CD8-positive, alpha-beta T cell (primary cell): ENCODE measurements at regions of chr10 and their contacts with region 1.

Region 1: DNA sequence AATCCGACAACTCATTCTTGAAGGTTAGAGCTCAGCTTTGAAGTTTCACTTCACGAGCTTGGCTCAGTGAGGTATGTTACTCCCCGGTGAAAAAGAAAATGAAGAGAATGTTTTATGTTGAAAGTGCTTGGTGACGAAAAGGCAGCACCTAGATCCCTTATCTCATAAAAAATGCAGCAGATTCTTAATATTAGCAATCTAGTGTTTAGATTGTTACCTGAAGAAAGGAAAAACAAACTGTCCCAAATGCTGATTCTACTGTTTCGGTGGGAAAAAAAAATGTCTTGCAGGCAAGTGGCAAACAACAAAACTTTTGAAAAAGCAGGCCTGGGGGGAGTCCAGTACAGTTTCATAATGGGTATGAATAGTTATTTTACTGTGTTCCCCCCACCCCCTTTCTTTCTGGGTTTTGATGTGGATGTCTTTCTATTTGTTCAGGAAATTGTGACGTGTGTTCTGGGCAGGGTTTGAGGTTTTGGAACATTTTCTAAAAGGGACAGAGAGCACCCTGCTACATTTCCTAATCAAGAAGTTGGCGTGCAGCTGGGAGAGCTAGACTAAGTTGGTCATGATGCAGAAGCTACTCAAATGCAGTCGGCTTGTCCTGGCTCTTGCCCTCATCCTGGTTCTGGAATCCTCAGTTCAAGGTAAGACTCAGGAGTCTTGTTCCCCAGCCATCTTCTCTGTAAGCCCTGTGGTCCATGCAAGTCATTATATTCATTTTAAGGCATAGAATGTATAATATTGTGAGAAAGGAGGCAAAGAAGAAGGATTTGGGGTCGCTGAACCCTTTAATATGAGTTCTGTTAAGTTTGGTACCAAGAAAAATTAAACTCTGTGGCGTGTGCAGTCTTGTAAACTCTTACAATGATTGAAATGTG is at the start of gene SRGN:
- DNase-seq: peak; percentile 57 to 96 (median 76)
- ATAC-seq: peak; percentile 57
- H3K4me3 ChIP-seq: peak within 1 kb of the TSS; percentile 62 to 89
- H3K4me3 Mint-ChIP-seq: peak within 1 kb of the TSS; percentile 95
- H3K27ac ChIP-seq: peak within 1 kb of the TSS; percentile 97
- H3K27ac Mint-ChIP-seq: peak within 1 kb of the TSS; percentile 99
- H3K4me1 ChIP-seq: peaks cover 41% of the 10 kb centered on the region
- H3K4me1 Mint-ChIP-seq: peaks cover 57% of the 10 kb centered on the region
- H3K27me3 ChIP-seq: no peaks in the 10 kb centered on the region
- H3K27me3 Mint-ChIP-seq: no peaks in the 10 kb centered on the region
- CTCF ChIP-seq: no peak
- total RNA-seq, gene SRGN: 570 to 583 TPM

Region 2: DNA sequence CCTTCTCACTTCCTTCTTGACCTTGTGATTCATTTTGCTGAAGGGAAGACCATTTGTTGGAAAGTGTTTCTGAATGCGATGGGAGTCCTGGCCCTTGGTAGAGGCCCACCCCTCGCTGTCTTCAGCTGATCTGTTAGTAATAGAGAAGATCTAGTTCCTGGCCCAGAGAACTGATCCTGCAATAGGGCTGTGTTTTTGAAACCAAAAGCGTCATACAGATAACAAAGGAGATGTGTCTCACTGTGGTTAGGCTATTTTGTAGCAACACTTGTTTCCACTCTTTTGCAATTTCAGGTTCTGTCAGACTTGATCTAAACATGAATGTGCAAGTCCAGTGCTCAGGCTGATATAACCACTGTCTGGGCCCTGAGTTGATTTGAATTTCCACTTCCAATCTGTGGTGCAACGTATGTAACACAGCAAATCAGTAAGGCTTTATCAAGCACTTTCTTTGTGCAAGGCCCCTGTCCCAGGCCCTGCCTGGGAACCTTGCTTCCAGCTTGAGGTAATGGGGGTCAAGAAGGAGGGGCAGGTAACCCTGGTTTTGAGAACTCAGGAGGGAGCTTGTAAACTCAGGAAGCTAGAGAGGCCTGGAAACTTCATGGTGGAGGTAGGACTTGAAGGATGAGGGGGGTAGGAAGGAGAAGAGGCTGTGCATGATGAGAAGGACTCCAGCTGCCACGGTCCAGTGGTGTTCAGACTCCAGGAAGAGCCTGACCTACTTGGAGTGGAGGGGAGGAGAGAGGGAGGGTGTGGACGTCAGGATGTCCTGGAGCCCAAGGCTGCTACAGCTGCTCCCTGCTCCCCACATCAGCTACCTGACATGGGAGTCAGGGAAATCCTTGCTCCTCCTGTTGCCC is 42.2 kb before region 1 on chr10:
- CTCF ChIA-PET with region 1: interaction called, 14 read pairs
- POLR2A ChIA-PET with region 1: interaction called, 6 read pairs
- intact Hi-C with region 1: loop called (anchors 1 to 2 kb)
- DNase-seq: peak in 8 of 9 experiments; percentile 6 to 79 (median 43)
- ATAC-seq: peak; percentile 78
- H3K4me3 ChIP-seq: no peak overlapping the region
- H3K4me3 Mint-ChIP-seq: peak overlapping the region; percentile 35
- H3K27ac ChIP-seq: peak overlapping the region; percentile 45 to 89
- H3K27ac Mint-ChIP-seq: peak overlapping the region; percentile 93
- H3K4me1 ChIP-seq: peaks cover 27% of the 10 kb centered on the region
- H3K4me1 Mint-ChIP-seq: peaks cover 24% of the 10 kb centered on the region
- H3K27me3 ChIP-seq: no peaks in the 10 kb centered on the region
- H3K27me3 Mint-ChIP-seq: no peaks in the 10 kb centered on the region
- CTCF ChIP-seq: no peak

Region 3: DNA sequence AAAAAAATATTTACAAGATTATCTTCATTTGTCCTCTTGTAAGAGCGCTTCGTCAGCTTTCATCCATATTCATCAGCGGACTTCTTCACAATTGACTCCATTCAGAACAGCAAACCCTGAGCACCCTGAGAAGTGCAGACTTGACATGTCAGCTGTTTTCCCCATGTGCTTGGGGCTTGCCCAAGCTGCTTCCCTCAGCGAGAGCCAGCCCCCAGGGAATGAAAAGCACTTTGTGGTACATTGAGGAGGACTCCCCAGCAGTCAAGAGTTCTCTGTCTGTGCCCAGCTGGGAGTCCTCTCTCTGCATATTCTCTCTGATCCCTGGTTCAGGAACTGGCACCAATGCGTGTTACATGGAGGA is 155.0 kb after region 1 on chr10:
- CTCF ChIA-PET with region 1: no interaction called
- POLR2A ChIA-PET with region 1: no interaction called
- intact Hi-C with region 1: no loop called
- DNase-seq: no peak
- ATAC-seq: no peak
- H3K4me3 ChIP-seq: no peak overlapping the region
- H3K4me3 Mint-ChIP-seq: no peak overlapping the region
- H3K27ac ChIP-seq: no peak overlapping the region
- H3K27ac Mint-ChIP-seq: no peak overlapping the region
- H3K4me1 ChIP-seq: peaks cover under 1% of the 10 kb centered on the region
- H3K4me1 Mint-ChIP-seq: no peaks in the 10 kb centered on the region
- H3K27me3 ChIP-seq: no peaks in the 10 kb centered on the region
- H3K27me3 Mint-ChIP-seq: no peaks in the 10 kb centered on the region
- CTCF ChIP-seq: no peak